ENCODE measurements at regions of chr17 and their contacts with region 1.

Region 1: DNA sequence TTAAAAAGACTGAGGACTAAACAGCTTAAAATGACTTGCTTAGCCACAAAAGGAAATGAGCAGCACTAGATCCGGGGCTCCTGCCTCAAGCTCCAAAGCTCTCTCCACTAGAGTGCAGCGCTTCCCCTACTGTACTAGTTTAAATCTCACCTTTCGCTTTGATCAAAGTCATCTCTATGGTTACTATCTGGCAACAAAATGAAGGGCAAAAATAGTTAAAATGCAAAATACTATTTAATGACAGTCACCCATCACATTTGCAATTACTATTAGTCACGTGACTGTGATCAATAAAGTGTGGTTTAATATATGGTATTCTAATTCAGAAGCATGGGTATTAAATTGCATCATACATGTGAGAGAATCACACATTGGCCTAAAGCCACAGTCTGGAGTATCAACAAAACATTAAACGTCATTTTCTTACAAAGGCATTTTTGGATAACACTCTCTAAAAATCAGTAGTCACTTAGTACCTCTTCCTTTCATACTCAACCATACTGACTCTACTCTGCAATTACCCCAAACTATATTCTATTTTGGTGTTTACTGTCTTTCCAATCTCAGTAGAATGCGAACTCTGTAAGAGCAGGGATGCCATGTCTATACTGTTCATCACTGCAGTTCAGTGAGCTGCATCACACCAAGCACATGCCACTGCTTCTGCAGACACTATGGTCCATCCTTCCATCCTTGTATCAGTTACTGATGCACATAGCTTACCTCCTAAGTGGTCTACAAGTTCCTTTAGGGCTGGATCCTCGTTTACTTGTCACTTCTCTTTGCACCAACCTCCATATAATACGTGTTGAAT is 6.2 kb downstream of the PSMD12 start:
- DNase-seq: no peak
- ATAC-seq: peak; percentile 45
- H3K4me3 Mint-ChIP-seq: no peak overlapping the region
- H3K27ac Mint-ChIP-seq: no peak overlapping the region
- H3K4me1 Mint-ChIP-seq: peaks cover 48% of the 10 kb centered on the region
- H3K27me3 Mint-ChIP-seq: no peaks in the 10 kb centered on the region
- CTCF ChIP-seq: no peak

Region 2: GRCh38 chr17:67656494-67657203 is 296.5 kb after region 1 on chr17:
- CTCF ChIA-PET with region 1: no interaction called
- POLR2A ChIA-PET with region 1: interaction called, 12 read pairs
- intact Hi-C with region 1: no loop called
- DNase-seq: no peak
- ATAC-seq: no peak
- H3K4me3 Mint-ChIP-seq: no peak overlapping the region
- H3K27ac Mint-ChIP-seq: no peak overlapping the region
- H3K4me1 Mint-ChIP-seq: peaks cover under 1% of the 10 kb centered on the region
- H3K27me3 Mint-ChIP-seq: no peaks in the 10 kb centered on the region
- CTCF ChIP-seq: no peak

Measured in activated B cell treated with CpG ODN at 0.5 μM for 24 hours (primary cell).